ENCODE measurements at regions of chr18 and their contacts with region 1.

Region 1: DNA sequence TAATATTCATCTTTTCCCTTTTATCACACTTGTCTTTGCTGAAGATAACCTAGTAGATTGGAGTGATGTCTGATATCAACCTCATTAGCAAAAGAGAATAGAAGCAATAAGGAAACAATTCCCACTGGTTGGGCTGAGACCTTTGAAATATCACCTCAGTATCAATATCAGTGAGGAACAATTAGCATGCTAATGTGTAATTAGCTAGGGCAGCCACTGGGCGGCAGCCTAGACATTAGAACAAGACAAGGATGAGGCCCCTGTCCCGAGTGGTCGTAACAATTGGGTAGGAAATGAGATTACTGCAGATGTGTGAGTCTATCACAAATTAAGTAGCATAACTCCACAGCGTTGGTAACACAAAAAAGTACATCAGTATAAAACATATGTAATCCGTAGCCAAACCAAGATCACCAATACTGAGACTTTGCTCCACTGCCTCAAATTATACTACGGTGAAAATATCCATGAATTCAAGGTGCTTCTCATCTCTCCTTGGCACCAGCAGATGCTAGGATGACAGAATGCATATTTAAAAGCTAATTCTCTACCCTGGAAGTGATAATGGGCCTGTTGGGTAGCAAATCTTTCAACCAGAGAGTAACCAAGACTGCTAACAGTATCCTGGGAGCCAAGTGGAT is 99.1 kb downstream of the ALPK2 start:
- DNase-seq: no peak
- ATAC-seq: peak; percentile 55
- H3K4me3 ChIP-seq: no peak overlapping the region
- H3K27ac ChIP-seq: peak overlapping the region; percentile 20; the same call in 1 of the 2 replicates
- H3K4me1 ChIP-seq: peaks cover 30% of the 10 kb centered on the region
- H3K27me3 ChIP-seq: no peaks in the 10 kb centered on the region
- CTCF ChIP-seq: peak; percentile 83 to 97 (median 96)
- EP300 ChIP-seq: no peak
- POLR2A ChIP-seq: no peak
- RAD21 ChIP-seq: peak; percentile 98

Region 2: GRCh38 chr18:58501066-58501896 is 28.6 kb before region 1 on chr18:
- CTCF ChIA-PET with region 1: interaction called, 15 read pairs
- POLR2A ChIA-PET with region 1: interaction called, 3 read pairs
- RAD21 ChIA-PET with region 1: interaction called, 57 read pairs
- SMC1A ChIA-PET with region 1: interaction called, 66 read pairs
- in situ Hi-C with region 1: no loop called
- intact Hi-C with region 1: no loop called
- DNase-seq: no peak
- ATAC-seq: peak; percentile 80
- H3K4me3 ChIP-seq: no peak overlapping the region
- H3K27ac ChIP-seq: no peak overlapping the region
- H3K4me1 ChIP-seq: peaks cover 6% of the 10 kb centered on the region
- H3K27me3 ChIP-seq: no peaks in the 10 kb centered on the region
- CTCF ChIP-seq: no peak
- EP300 ChIP-seq: peak; percentile 35 to 68; a peak in 2 of 4 replicates
- POLR2A ChIP-seq: no peak
- RAD21 ChIP-seq: no peak

Region 3: GRCh38 chr18:58567453-58568196 is 37.8 kb after region 1 on chr18:
- CTCF ChIA-PET with region 1: interaction called, 28 read pairs
- POLR2A ChIA-PET with region 1: interaction called, 6 read pairs
- RAD21 ChIA-PET with region 1: interaction called, 353 read pairs
- SMC1A ChIA-PET with region 1: interaction called, 578 read pairs
- in situ Hi-C with region 1: no loop called
- intact Hi-C with region 1: loop called (anchors 1 kb)
- DNase-seq: no peak
- ATAC-seq: no peak
- H3K4me3 ChIP-seq: no peak overlapping the region
- H3K27ac ChIP-seq: no peak overlapping the region
- H3K4me1 ChIP-seq: peaks cover 28% of the 10 kb centered on the region
- H3K27me3 ChIP-seq: no peaks in the 10 kb centered on the region
- CTCF ChIP-seq: no peak
- EP300 ChIP-seq: no peak
- POLR2A ChIP-seq: no peak
- RAD21 ChIP-seq: no peak

Region 4: DNA sequence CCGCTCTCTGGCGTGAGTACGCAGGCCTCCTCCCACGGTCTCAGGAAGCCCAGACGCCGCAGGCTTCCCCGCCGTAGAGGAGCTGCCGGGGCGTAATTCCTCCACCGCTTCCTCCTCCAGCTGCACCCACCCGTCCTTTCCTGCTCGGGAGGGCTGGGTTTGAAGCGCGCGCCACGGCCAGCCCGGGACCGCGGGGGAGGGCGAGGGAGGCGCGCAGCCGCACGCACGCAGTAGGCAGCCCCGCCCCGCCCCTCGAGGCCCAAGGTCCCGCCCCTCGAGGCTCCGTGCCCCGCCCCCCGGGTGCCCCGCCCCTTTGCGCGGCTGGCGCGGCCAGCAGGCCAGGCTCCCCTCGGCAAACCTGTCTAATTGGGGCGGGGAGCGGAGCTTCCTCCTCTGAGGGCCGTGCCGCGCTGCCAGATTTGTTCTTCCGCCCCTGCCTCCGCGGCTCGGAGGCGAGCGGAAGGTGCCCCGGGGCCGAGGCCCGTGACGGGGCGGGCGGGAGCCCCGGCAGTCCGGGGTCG is 141.3 kb after region 1 on chr18 and contains the start of gene MALT1:
- CTCF ChIA-PET with region 1: interaction called, 28 read pairs
- POLR2A ChIA-PET with region 1: interaction called, 40 read pairs
- RAD21 ChIA-PET with region 1: interaction called, 44 read pairs
- SMC1A ChIA-PET with region 1: interaction called, 682 read pairs
- in situ Hi-C with region 1: no loop called
- intact Hi-C with region 1: no loop called
- DNase-seq: peak; percentile 75
- ATAC-seq: peak; percentile 78
- H3K4me3 ChIP-seq: peak within 1 kb of the TSS; percentile 95
- H3K27ac ChIP-seq: peak within 1 kb of the TSS; percentile 93
- H3K4me1 ChIP-seq: peaks cover 16% of the 10 kb centered on the region; the same call in 1 of the 2 replicates
- H3K27me3 ChIP-seq: no peaks in the 10 kb centered on the region
- CTCF ChIP-seq: no peak
- EP300 ChIP-seq: peak in 1 of 2 experiments; percentile 17; a peak in 1 of 4 replicates
- POLR2A ChIP-seq: peak; percentile 96
- RAD21 ChIP-seq: no peak; the same call in 1 of the 2 replicates
- polyA plus RNA-seq, gene MALT1: 17.6 to 32.5 TPM

Region 5: GRCh38 chr18:58748899-58749595 is 219.2 kb after region 1 on chr18:
- CTCF ChIA-PET with region 1: interaction called, 16 read pairs
- POLR2A ChIA-PET with region 1: interaction called, 3 read pairs
- RAD21 ChIA-PET with region 1: interaction called, 15 read pairs
- SMC1A ChIA-PET with region 1: interaction called, 9 read pairs
- in situ Hi-C with region 1: no loop called
- intact Hi-C with region 1: no loop called
- DNase-seq: no peak
- ATAC-seq: peak; percentile 40; the same call in 2 of the 3 replicates
- H3K4me3 ChIP-seq: no peak overlapping the region
- H3K27ac ChIP-seq: no peak overlapping the region
- H3K4me1 ChIP-seq: no peaks in the 10 kb centered on the region
- H3K27me3 ChIP-seq: no peaks in the 10 kb centered on the region
- CTCF ChIP-seq: no peak
- EP300 ChIP-seq: no peak
- POLR2A ChIP-seq: no peak
- RAD21 ChIP-seq: no peak

Region 6: GRCh38 chr18:58960946-58961722 is 431.3 kb after region 1 on chr18:
- CTCF ChIA-PET with region 1: interaction called, 3 read pairs
- POLR2A ChIA-PET with region 1: interaction called, 4 read pairs
- RAD21 ChIA-PET with region 1: no interaction called
- SMC1A ChIA-PET with region 1: no interaction called
- in situ Hi-C with region 1: no loop called
- intact Hi-C with region 1: loop called (anchors 10 kb)
- DNase-seq: no peak
- ATAC-seq: no peak
- H3K4me3 ChIP-seq: no peak overlapping the region
- H3K27ac ChIP-seq: no peak overlapping the region
- H3K4me1 ChIP-seq: peaks cover 22% of the 10 kb centered on the region
- H3K27me3 ChIP-seq: no peaks in the 10 kb centered on the region
- CTCF ChIP-seq: no peak
- EP300 ChIP-seq: no peak
- POLR2A ChIP-seq: no peak
- RAD21 ChIP-seq: no peak